Gastrocnemius medialis (tissue), 4 donors: ENCODE measurements at regions of chr2 and their contacts with region 1.

Region 1: GRCh38 chr2:80326214-80326613 is 21.7 kb upstream of the LRRTM1 start:
- DNase-seq: no peak
- ATAC-seq: no peak
- H3K4me3 ChIP-seq: no peak overlapping the region
- H3K27ac ChIP-seq: no peak overlapping the region
- H3K4me1 ChIP-seq: no peaks in the 10 kb centered on the region
- H3K27me3 ChIP-seq: peaks cover 2 to 19% (median 12%) of the 10 kb centered on the region in 3 donors
- CTCF ChIP-seq: peak in 1 of 5 experiments; percentile 12
- POLR2A ChIP-seq: no peak

Region 2: GRCh38 chr2:80209458-80209857 is 116.8 kb before region 1 on chr2:
- in situ Hi-C with region 1: no loop called
- intact Hi-C with region 1: no loop called
- DNase-seq: no peak
- ATAC-seq: no peak
- H3K4me3 ChIP-seq: no peak overlapping the region
- H3K27ac ChIP-seq: no peak overlapping the region
- H3K4me1 ChIP-seq: no peaks in the 10 kb centered on the region
- H3K27me3 ChIP-seq: no peaks in the 10 kb centered on the region
- CTCF ChIP-seq: no peak
- POLR2A ChIP-seq: no peak

Region 3: DNA sequence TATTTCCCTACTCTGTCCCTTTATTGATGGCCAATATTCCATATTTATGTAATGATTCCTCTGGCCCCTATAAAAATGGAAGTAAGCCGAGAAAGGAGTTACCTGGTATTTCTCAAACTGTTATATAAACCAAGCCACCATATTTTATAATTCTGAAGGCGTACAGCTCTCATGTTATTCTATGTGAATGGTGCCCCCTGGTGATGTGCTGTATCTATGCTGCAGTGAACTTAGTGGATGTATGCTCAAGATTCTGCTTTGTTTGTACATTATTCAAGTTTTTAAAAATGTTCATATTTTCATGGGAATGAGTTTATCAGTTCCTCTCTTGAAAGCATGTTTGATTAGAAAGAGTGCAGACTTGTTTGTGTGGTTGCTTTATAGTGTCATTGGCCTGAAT is 172.9 kb after region 1 on chr2:
- in situ Hi-C with region 1: loop called in 1 of 4 experiments (anchors 10 kb)
- intact Hi-C with region 1: loop called (anchors 5 kb)
- DNase-seq: no peak
- ATAC-seq: no peak
- H3K4me3 ChIP-seq: no peak overlapping the region
- H3K27ac ChIP-seq: no peak overlapping the region
- H3K4me1 ChIP-seq: no peaks in the 10 kb centered on the region
- H3K27me3 ChIP-seq: no peaks in the 10 kb centered on the region
- CTCF ChIP-seq: peak in 2 of 5 experiments; percentile 41 to 43
- POLR2A ChIP-seq: no peak

Region 4: GRCh38 chr2:80506563-80506962 is 180.3 kb after region 1 on chr2:
- in situ Hi-C with region 1: loop called in 1 of 4 experiments (anchors 10 kb)
- intact Hi-C with region 1: no loop called
- DNase-seq: no peak
- ATAC-seq: no peak
- H3K4me3 ChIP-seq: no peak overlapping the region
- H3K27ac ChIP-seq: no peak overlapping the region
- H3K4me1 ChIP-seq: no peaks in the 10 kb centered on the region
- H3K27me3 ChIP-seq: no peaks in the 10 kb centered on the region
- CTCF ChIP-seq: no peak
- POLR2A ChIP-seq: no peak